ENCODE measurements at regions of chr21 and their contacts with region 1.

Region 1: DNA sequence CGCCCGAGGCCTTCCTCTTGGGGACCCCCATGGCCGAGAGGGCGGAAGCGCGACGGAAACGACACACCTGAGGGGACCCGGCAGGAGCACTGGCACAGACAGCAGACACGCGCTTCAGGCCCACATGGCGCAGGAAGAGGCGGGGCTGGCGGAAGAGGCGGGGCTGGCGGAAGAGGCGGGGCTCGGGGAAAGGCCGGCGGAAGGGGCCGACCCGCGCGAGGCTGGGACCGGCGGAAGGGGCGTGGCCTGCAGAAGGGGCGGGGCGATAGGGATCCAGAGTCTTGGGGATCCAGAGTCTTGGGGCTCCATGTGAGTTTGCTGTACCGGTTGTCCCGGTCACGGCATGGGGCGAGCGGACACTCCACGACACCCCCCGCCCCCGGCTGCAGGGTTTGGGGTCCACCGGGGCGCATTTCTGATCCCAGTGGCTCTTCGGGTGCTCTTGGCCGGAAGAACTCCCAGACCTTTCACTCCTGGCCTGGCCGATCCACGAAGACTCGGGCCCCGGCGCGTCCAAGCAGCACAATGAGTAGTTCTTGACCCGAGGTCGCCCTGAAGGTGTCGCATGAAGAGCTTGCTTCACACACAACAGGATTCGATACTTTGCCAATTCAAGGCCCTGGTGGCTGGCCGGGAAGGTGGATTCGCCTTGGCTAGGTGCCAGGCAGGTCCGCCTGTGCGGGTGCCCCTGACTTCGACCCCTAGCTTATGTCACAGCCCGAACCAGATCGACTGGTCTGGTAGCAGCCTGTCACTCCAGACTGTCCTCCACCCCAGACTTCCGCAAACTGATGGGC is at the start of gene URB1:
- DNase-seq: peak; percentile 89
- H3K4me3 Mint-ChIP-seq: peak within 1 kb of the TSS; percentile 91
- H3K27ac Mint-ChIP-seq: peak within 1 kb of the TSS; percentile 88
- H3K4me1 Mint-ChIP-seq: peaks cover 48% of the 10 kb centered on the region
- H3K27me3 Mint-ChIP-seq: peaks cover 3% of the 10 kb centered on the region
- total RNA-seq, gene URB1: 42.1 and 42.8 TPM in 2 replicates

Region 2: DNA sequence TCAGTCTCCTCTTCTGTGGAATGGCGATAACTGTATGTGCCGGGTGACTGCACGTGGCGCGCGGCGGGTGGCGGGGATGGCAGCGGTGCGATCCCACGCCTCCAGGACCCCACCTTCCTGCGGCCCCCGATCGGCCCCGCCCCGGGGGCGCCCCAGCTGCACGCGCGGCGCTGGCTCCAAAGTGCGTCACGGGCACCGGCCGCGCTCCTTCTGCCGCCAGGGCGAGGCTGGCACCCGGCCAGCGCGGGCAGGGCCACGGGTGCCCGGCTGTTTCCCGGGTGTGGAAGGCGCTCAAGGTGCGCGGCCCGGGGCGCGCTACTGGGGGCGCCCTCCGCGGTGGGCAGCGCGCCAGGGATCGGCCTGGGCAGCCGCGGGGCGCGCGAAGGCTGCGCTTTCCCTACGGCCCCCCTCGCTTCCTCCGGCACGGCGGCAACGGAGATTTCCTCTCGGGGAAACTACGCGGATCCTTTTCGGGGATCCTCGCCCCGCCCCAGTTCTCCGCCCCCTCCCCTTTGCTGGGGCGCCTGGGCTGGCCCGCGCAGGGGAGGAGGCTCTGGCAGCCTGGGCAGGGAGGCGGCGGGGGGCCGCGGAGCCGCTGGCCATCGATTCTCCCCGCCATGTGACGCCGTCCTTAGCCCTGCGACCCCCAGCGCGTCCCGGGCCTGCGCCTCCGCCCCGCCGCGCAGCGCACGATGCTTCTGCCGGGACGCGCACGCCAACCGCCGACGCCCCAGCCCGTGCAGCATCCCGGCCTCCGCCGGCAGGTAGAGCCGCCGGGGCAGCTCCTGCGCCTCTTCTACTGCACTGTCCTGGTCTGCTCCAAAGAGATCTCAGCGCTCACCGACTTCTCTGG is 19.3 kb after region 1 on chr21 and contains the start of gene EVA1C:
- intact Hi-C with region 1: loop called (anchors 1 kb)
- DNase-seq: peak; percentile 39
- H3K4me3 Mint-ChIP-seq: peak within 1 kb of the TSS; percentile 94
- H3K27ac Mint-ChIP-seq: peak within 1 kb of the TSS; percentile 87
- H3K4me1 Mint-ChIP-seq: peaks cover 33% of the 10 kb centered on the region
- H3K27me3 Mint-ChIP-seq: peaks cover 12% of the 10 kb centered on the region
- total RNA-seq, gene EVA1C: 6.2 and 7.6 TPM in 2 replicates

Region 3: DNA sequence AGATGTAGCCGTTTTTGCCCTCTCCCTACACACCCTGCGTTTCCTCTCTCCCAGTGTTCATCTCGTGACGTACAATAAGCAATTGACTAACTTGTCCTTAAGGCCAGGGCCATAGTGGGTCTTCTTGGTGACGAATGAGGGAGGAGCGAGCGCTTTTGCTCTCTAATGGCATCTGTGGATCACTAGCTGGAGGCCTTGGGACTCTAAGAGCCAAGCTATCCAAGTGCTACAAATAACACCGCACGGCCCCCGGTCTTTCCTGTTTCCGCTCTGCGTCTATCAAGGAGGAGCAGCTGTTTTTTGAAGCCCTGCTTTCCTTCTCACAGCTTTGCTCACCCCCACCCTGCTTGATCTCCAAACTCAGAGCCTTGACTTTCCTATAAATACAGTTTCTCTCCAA is 44.7 kb after region 1 on chr21:
- intact Hi-C with region 1: no loop called
- DNase-seq: no peak
- H3K4me3 Mint-ChIP-seq: no peak overlapping the region
- H3K27ac Mint-ChIP-seq: no peak overlapping the region
- H3K4me1 Mint-ChIP-seq: no peaks in the 10 kb centered on the region
- H3K27me3 Mint-ChIP-seq: peaks cover 4% of the 10 kb centered on the region